Activated naive CD4-positive, alpha-beta T cell treated with anti-CD3 and anti-CD28 coated beads for 36 hours (primary cell): ENCODE measurements at regions of chr5 and their contacts with region 1.

Region 1: DNA sequence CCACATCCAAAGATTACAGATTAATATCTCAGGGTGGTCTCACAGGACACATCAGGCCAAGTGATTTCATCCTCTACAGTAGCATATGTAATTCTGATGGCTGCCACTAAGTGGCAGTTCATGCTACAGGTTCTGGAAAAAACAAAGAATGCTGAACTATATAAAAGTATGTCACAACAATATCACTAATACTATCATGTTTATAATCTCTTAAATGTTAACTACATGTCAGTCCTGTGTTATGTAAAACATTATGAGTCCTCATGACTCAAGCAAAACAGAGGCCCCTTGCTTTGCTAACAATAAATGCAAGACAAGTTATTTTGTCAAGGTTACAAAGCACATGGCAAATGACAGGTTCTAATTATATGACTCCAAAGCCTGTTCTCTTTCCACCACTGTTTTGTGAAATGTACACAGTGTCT is 233.2 kb downstream of the FBXL17 start:
- DNase-seq: no peak
- H3K4me3 Mint-ChIP-seq: no peak overlapping the region
- H3K27ac Mint-ChIP-seq: no peak overlapping the region
- H3K4me1 Mint-ChIP-seq: peaks cover 4% of the 10 kb centered on the region
- H3K27me3 Mint-ChIP-seq: no peaks in the 10 kb centered on the region

Region 2: GRCh38 chr5:108212640-108213346 is 64.1 kb after region 1 on chr5:
- CTCF ChIA-PET with region 1: no interaction called
- intact Hi-C with region 1: no loop called
- DNase-seq: no peak
- H3K4me3 Mint-ChIP-seq: no peak overlapping the region
- H3K27ac Mint-ChIP-seq: no peak overlapping the region
- H3K4me1 Mint-ChIP-seq: no peaks in the 10 kb centered on the region
- H3K27me3 Mint-ChIP-seq: no peaks in the 10 kb centered on the region

Region 3: GRCh38 chr5:108345541-108346171 is 196.9 kb after region 1 on chr5:
- CTCF ChIA-PET with region 1: no interaction called
- intact Hi-C with region 1: loop called (anchors 1 kb)
- DNase-seq: no peak
- H3K4me3 Mint-ChIP-seq: no peak overlapping the region
- H3K27ac Mint-ChIP-seq: no peak overlapping the region
- H3K4me1 Mint-ChIP-seq: no peaks in the 10 kb centered on the region
- H3K27me3 Mint-ChIP-seq: no peaks in the 10 kb centered on the region